Dendritic cell treated with granulocyte-macrophage colony-stimulating factor and Interleukin-4, amounts not matched to agents 40 ng/mL and 50 ng/mL, for 4 days (primary cell): ENCODE measurements at regions of chr12 and their contacts with region 1.

Region 1: DNA sequence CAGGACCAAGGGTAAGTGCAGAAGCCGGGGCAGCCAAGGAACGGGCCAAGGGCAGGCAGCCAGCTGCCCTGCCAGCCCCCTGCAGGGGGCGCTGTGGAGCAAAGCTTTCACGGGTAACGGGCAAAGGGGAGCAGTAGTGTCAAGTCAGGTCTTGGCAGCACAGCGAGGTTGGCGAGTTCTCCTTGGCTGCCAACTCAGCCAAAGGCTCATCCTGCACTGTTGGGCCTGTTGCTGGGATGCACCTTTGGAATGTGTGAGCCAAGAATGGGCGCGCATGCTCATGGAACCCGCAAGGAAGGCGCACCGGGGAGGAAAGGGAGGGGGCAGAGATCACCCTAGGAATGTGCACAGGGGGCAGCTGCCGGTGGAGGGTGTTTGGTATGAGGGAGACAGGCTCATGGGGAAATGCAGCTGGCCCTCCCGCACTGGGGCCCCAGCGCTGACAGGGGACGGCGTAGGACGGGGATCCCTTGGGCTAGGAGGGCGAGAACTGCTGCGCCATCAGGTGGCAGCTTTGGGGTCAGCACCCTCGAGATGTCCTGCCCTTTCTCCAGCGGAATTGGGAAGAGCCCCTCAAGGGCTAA is 138.0 kb downstream of the ASCL4 start:
- H3K4me3 Mint-ChIP-seq: peak overlapping the region; percentile 76
- H3K27ac Mint-ChIP-seq: no peak overlapping the region
- H3K4me1 Mint-ChIP-seq: peaks cover 6% of the 10 kb centered on the region
- H3K27me3 Mint-ChIP-seq: peaks cover 51% of the 10 kb centered on the region

Region 2: GRCh38 chr12:107670999-107671643 is 241.4 kb before region 1 on chr12:
- intact Hi-C with region 1: loop called (anchors 1 kb)
- H3K4me3 Mint-ChIP-seq: no peak overlapping the region
- H3K27ac Mint-ChIP-seq: no peak overlapping the region
- H3K4me1 Mint-ChIP-seq: peaks cover 8% of the 10 kb centered on the region
- H3K27me3 Mint-ChIP-seq: peaks cover 6% of the 10 kb centered on the region

Region 3: GRCh38 chr12:107891972-107892371 is 20.5 kb before region 1 on chr12:
- intact Hi-C with region 1: loop called (anchors 1 kb)
- H3K4me3 Mint-ChIP-seq: no peak overlapping the region
- H3K27ac Mint-ChIP-seq: no peak overlapping the region
- H3K4me1 Mint-ChIP-seq: no peaks in the 10 kb centered on the region
- H3K27me3 Mint-ChIP-seq: peaks cover 2% of the 10 kb centered on the region